Common myeloid progenitor, CD34-positive (primary cell): ENCODE measurements at regions of chr14 and their contacts with region 1.

Region 1: DNA sequence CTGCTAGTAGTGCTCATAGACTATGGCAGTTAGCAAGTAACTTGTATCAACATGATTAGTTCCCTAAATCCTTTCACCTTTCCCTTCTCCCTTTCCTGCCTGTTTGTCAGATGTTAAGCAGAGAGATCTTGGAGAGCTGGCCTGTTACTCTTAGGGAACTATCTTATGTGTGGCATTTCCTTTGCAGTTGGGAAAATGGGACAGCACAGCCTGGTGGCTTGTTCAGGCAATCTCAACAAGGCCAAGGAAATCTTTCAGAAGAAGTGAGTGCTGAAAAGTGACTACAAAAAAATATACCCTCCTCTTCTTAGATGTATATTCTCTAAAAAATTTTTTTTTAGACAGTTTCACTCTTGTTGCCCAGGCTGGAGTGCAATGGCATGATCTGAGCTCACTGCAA is 7.4 kb downstream of the PARP2 start:
- DNase-seq: no peak
- H3K4me3 ChIP-seq: no peak overlapping the region
- H3K27ac ChIP-seq: no peak overlapping the region
- H3K4me1 ChIP-seq: no peaks in the 10 kb centered on the region
- H3K27me3 ChIP-seq: no peaks in the 10 kb centered on the region

Region 2: GRCh38 chr14:20327005-20327869 is 23.6 kb before region 1 on chr14:
- CTCF ChIA-PET with region 1: interaction called, 69 read pairs
- POLR2A ChIA-PET with region 1: no interaction called
- DNase-seq: peak; percentile 73 to 77 (median 75)
- H3K4me3 ChIP-seq: no peak overlapping the region
- H3K27ac ChIP-seq: no peak overlapping the region
- H3K4me1 ChIP-seq: peaks cover under 1 to 15% (median 4%) of the 10 kb centered on the region in 4 experiments
- H3K27me3 ChIP-seq: no peaks in the 10 kb centered on the region